Activated CD8-positive, alpha-beta T cell treated with anti-CD3 and anti-CD28 coated beads, Interleukin-2, amount 10 ng/mL, durations not matched to agents 7 days and 5 days (primary cell): ENCODE measurements at regions of chr3 and their contacts with region 1.

Region 1: DNA sequence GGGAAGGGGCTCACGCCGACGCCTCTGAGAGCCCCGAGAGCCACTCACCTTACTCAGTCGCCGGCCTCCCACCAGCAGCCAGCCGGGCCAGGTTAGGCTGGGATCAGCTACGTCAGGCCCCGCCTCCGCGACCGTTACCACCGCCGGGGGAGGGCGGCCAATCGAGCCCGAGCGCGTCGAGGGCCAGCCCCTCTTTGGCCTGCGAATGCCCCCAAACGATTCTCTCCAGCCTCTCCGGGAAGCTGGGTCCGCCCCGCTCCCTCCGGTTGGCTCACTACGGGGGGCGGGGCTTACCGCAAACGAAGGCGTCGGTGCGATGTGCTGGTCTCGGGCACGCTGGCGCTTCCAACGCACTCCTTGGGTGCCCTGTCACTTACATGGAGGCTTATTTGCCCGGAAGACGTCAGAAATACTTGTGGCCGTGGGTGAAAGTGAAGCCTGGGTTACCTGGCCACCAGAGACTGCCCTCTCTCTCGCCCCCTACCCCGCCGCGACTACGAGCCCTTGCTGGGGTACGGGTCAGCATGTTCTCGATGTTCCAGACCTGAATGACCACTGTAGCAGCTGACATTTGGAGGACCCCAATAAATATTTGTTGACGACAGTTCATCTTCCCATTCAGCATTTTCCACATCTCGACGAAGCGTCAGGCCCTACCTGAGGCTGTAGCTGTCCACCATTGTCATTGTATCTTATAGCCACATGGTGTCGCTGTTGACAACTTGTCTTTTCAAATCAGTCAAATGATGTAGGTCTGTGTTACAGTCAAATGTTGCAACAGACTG is at the start of gene CEP70:
- DNase-seq: peak; percentile 93
- ATAC-seq: peak; percentile 96
- H3K4me3 Mint-ChIP-seq: peak within 1 kb of the TSS; percentile 86
- H3K27ac Mint-ChIP-seq: peak within 1 kb of the TSS; percentile 87
- H3K4me1 Mint-ChIP-seq: peaks cover 12% of the 10 kb centered on the region
- H3K27me3 Mint-ChIP-seq: no peaks in the 10 kb centered on the region
- total RNA-seq, gene CEP70: 15.9 to 19.5 TPM

Region 2: GRCh38 chr3:138479438-138479863 is 114.9 kb before region 1 on chr3:
- CTCF ChIA-PET with region 1: interaction called, 76 read pairs
- POLR2A ChIA-PET with region 1: no interaction called
- DNase-seq: peak; percentile 60
- ATAC-seq: peak; percentile 42
- H3K4me3 Mint-ChIP-seq: no peak overlapping the region
- H3K27ac Mint-ChIP-seq: no peak overlapping the region
- H3K4me1 Mint-ChIP-seq: no peaks in the 10 kb centered on the region
- H3K27me3 Mint-ChIP-seq: peaks cover 8% of the 10 kb centered on the region

Region 3: DNA sequence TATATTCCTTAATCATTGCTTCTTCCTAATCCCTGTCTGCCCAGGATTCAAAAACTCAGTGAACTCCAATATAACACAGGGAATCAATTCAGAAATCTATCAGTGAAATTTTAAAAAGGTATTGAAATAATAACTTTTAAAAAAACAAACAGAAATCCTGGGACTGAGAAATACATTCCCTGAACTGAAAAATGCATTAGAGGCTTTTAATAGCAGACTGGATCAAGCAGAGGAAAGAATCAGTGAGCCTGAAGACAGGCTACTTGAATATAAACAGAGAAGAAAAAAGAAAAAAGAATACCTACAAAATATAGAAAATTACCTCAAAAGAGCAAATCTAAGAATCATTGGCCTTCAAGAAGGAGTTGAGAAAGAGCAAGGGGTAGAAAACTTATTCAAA is 55.0 kb before region 1 on chr3:
- CTCF ChIA-PET with region 1: no interaction called
- POLR2A ChIA-PET with region 1: no interaction called
- DNase-seq: no peak
- ATAC-seq: no peak
- H3K4me3 Mint-ChIP-seq: no peak overlapping the region
- H3K27ac Mint-ChIP-seq: no peak overlapping the region
- H3K4me1 Mint-ChIP-seq: no peaks in the 10 kb centered on the region
- H3K27me3 Mint-ChIP-seq: no peaks in the 10 kb centered on the region

Region 4: GRCh38 chr3:138578141-138578540 is 16.2 kb before region 1 on chr3:
- CTCF ChIA-PET with region 1: interaction called, 17 read pairs
- POLR2A ChIA-PET with region 1: interaction called, 11 read pairs
- DNase-seq: no peak
- ATAC-seq: peak; percentile 63
- H3K4me3 Mint-ChIP-seq: peak overlapping the region; percentile 34
- H3K27ac Mint-ChIP-seq: peak overlapping the region; percentile 81
- H3K4me1 Mint-ChIP-seq: peaks cover 27% of the 10 kb centered on the region
- H3K27me3 Mint-ChIP-seq: no peaks in the 10 kb centered on the region

Region 5: GRCh38 chr3:138625707-138626365 is 31.5 kb after region 1 on chr3:
- CTCF ChIA-PET with region 1: interaction called, 10 read pairs
- POLR2A ChIA-PET with region 1: no interaction called
- DNase-seq: no peak
- ATAC-seq: no peak
- H3K4me3 Mint-ChIP-seq: no peak overlapping the region
- H3K27ac Mint-ChIP-seq: no peak overlapping the region
- H3K4me1 Mint-ChIP-seq: peaks cover 4% of the 10 kb centered on the region
- H3K27me3 Mint-ChIP-seq: no peaks in the 10 kb centered on the region

Region 6: GRCh38 chr3:138694287-138695007 is 100.1 kb after region 1 on chr3:
- CTCF ChIA-PET with region 1: interaction called, 21 read pairs
- POLR2A ChIA-PET with region 1: no interaction called
- DNase-seq: no peak
- ATAC-seq: no peak
- H3K4me3 Mint-ChIP-seq: no peak overlapping the region
- H3K27ac Mint-ChIP-seq: no peak overlapping the region
- H3K4me1 Mint-ChIP-seq: no peaks in the 10 kb centered on the region
- H3K27me3 Mint-ChIP-seq: no peaks in the 10 kb centered on the region

Region 7: GRCh38 chr3:138935848-138936740 is 341.8 kb after region 1 on chr3:
- CTCF ChIA-PET with region 1: interaction called, 15 read pairs
- POLR2A ChIA-PET with region 1: no interaction called
- DNase-seq: peak; percentile 65
- ATAC-seq: peak; percentile 78
- H3K4me3 Mint-ChIP-seq: peak overlapping the region; percentile 61
- H3K27ac Mint-ChIP-seq: no peak overlapping the region
- H3K4me1 Mint-ChIP-seq: peaks cover 33% of the 10 kb centered on the region
- H3K27me3 Mint-ChIP-seq: peaks cover 68% of the 10 kb centered on the region